Stomach (tissue), 19 donors: ENCODE measurements at regions of chr19 and their contacts with region 1.

Region 1: GRCh38 chr19:18251587-18252369 is 22.5 kb downstream of the IQCN start:
- DNase-seq: peak; percentile 86 to 89
- H3K4me3 ChIP-seq: no peak overlapping the region
- H3K27ac ChIP-seq: no peak overlapping the region
- H3K4me1 ChIP-seq: peaks cover 0 to 20% (median 9%) of the 10 kb centered on the region in 4 donors
- H3K27me3 ChIP-seq: peaks cover 0 to 24% (median 0%) of the 10 kb centered on the region in 3 donors
- CTCF ChIP-seq: peak in 6 of 7 experiments; percentile 73 to 98 (median 96)
- EP300 ChIP-seq: no peak
- POLR2A ChIP-seq: no peak

Region 2: DNA sequence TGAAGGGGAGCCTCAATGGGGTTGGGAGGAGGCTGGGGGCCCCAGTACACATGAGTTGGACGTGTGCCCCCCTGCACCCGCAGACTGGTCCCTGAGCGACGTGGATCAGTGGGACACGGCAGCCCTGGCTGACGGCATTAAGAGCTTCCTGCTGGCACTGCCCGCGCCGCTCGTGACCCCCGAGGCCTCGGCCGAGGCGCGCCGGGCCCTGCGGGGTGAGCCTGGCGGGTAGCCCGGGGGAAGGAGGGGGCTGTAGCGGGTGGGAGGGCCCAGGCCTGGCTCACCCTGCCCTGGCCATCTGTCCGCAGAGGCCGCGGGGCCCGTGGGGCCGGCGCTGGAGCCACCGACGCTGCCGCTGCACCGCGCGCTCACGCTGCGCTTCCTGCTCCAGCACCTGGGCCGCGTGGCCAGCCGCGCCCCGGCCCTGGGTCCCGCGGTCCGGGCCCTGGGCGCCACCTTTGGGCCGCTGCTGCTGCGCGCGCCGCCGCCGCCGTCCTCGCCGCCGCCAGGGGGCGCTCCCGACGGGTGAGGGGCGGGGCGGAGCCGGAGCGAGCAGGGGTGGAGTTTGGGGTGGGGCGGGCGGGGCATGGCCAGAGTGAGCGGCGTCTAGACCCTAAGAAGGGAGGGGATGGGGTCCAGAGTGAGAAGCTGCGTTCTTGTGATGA is 90.7 kb before region 1 on chr19:
- intact Hi-C with region 1: no loop called
- DNase-seq: peak; percentile 87 to 89
- H3K4me3 ChIP-seq: peak overlapping the region; percentile 42 to 51 (median 48)
- H3K27ac ChIP-seq: peak overlapping the region; percentile 77 to 91 (median 81)
- H3K4me1 ChIP-seq: peaks cover 35 to 48% (median 43%) of the 10 kb centered on the region in 4 donors
- H3K27me3 ChIP-seq: no peaks in the 10 kb centered on the region
- CTCF ChIP-seq: peak in 3 of 7 experiments; percentile 48 to 98 (median 58)
- EP300 ChIP-seq: no peak
- POLR2A ChIP-seq: no peak

Region 3: GRCh38 chr19:18214779-18215433 is 36.9 kb before region 1 on chr19:
- intact Hi-C with region 1: loop called (anchors 5 kb)
- DNase-seq: no peak
- H3K4me3 ChIP-seq: no peak overlapping the region
- H3K27ac ChIP-seq: no peak overlapping the region
- H3K4me1 ChIP-seq: no peaks in the 10 kb centered on the region
- H3K27me3 ChIP-seq: peaks cover 0 to 3% (median 0%) of the 10 kb centered on the region in 3 donors
- CTCF ChIP-seq: no peak
- EP300 ChIP-seq: no peak
- POLR2A ChIP-seq: no peak